ENCODE measurements at regions of chr17 and their contacts with region 1.

Region 1: GRCh38 chr17:80991645-80992076 is at the start of gene CHMP6:
- DNase-seq: peak; percentile 87
- H3K4me3 ChIP-seq: peak within 1 kb of the TSS; percentile 98
- H3K27ac ChIP-seq: peak within 1 kb of the TSS; percentile 86
- H3K4me1 ChIP-seq: peaks cover 3% of the 10 kb centered on the region
- H3K27me3 ChIP-seq: no peaks in the 10 kb centered on the region
- CTCF ChIP-seq: no peak
- total RNA-seq, gene CHMP6: 18.7 and 21.3 TPM in 2 replicates

Region 2: GRCh38 chr17:80773243-80773991 is 218.2 kb before region 1 on chr17:
- CTCF ChIA-PET with region 1: no interaction called
- POLR2A ChIA-PET with region 1: no interaction called
- intact Hi-C with region 1: no loop called
- DNase-seq: no peak
- H3K4me3 ChIP-seq: no peak overlapping the region
- H3K27ac ChIP-seq: no peak overlapping the region
- H3K4me1 ChIP-seq: peaks cover 10% of the 10 kb centered on the region
- H3K27me3 ChIP-seq: no peaks in the 10 kb centered on the region
- CTCF ChIP-seq: 0 out of 2 replicates have a peak, but pooled peaks have one; percentile 17

Region 3: DNA sequence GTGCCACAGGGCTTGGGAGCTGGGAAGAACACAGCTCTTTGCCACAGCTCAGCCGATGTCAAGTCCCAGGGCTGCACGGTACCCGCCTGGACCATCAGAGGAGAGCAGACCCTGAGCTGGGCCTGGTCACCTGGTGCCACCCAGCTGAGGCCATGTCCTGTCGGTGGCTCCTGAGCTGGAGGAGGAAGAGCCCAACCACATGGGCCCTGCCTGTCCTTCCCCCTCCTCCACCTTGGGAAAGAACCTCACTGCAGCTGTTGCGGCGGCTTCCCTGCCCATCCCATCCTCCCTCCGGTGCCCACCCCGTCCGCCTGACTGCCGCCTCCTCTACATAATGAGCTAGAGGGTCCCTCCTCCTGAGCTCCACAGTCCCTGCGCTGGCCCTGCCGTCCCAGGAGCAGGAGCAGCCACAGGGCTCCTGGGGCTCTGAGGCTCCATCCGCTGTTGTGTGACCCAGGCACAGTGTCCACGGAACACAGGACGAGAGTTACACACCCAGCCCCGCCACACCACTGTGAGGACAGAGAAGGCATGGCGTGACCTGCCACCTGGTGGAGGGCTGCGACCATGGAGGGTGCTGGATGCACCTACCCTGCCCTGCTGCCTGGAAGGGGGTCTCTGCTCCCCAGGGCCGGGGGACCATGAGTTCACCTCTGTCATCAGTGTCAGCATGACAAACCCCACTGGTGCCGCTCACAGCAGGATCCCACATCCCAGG is 21.5 kb before region 1 on chr17:
- CTCF ChIA-PET with region 1: no interaction called
- POLR2A ChIA-PET with region 1: no interaction called
- intact Hi-C with region 1: no loop called
- DNase-seq: peak; percentile 41
- H3K4me3 ChIP-seq: no peak overlapping the region
- H3K27ac ChIP-seq: no peak overlapping the region
- H3K4me1 ChIP-seq: peaks cover 9% of the 10 kb centered on the region
- H3K27me3 ChIP-seq: no peaks in the 10 kb centered on the region
- CTCF ChIP-seq: peak; percentile 56

Region 4: GRCh38 chr17:81027591-81028505 is 36.2 kb after region 1 on chr17:
- CTCF ChIA-PET with region 1: no interaction called
- POLR2A ChIA-PET with region 1: interaction called, 16 read pairs
- intact Hi-C with region 1: no loop called
- DNase-seq: no peak
- H3K4me3 ChIP-seq: no peak overlapping the region
- H3K27ac ChIP-seq: no peak overlapping the region
- H3K4me1 ChIP-seq: peaks cover 23% of the 10 kb centered on the region
- H3K27me3 ChIP-seq: no peaks in the 10 kb centered on the region
- CTCF ChIP-seq: no peak

Region 5: DNA sequence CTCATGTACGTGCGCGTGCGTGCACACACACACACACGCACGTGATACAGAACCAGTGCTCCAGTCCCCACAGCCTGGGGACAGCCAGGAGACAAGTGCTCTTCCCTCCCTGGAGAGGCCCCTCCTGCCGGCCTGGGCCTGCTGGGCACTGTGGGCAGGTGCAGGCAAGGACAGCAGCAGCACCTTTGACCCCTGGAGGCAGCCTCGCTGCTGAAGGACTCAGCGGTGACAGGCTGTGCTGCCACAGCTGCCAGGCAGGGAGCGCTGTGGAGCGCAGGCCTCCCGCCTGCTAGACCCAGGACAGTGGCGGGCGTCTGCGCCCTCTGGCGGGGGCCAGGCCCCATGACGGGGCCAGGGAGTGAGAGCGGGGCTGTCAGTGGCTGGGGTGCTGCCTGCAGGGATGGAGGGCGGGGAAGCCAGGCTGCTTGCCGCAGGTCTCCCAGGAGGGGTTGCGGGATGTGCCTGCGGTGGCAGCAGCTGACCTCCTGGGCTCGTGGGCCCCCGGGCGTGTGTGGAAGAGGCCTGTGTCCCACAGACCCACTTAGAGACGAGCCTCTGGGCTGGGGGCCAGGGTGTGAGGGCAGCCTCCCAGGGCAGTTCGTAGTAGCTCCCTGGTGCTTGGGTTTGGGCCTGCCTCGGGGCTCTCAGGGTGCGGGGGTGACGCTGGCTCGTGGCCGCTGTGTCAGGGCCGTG is 110.1 kb after region 1 on chr17:
- CTCF ChIA-PET with region 1: interaction called, 11 read pairs
- POLR2A ChIA-PET with region 1: no interaction called
- intact Hi-C with region 1: loop called (anchors 2 kb)
- DNase-seq: peak; percentile 83
- H3K4me3 ChIP-seq: no peak overlapping the region
- H3K27ac ChIP-seq: no peak overlapping the region
- H3K4me1 ChIP-seq: peaks cover 15% of the 10 kb centered on the region
- H3K27me3 ChIP-seq: no peaks in the 10 kb centered on the region
- CTCF ChIP-seq: peak; percentile 100

Measured in A673 (cell line).